ENCODE measurements at regions of chr3 and their contacts with region 1.

Region 1: DNA sequence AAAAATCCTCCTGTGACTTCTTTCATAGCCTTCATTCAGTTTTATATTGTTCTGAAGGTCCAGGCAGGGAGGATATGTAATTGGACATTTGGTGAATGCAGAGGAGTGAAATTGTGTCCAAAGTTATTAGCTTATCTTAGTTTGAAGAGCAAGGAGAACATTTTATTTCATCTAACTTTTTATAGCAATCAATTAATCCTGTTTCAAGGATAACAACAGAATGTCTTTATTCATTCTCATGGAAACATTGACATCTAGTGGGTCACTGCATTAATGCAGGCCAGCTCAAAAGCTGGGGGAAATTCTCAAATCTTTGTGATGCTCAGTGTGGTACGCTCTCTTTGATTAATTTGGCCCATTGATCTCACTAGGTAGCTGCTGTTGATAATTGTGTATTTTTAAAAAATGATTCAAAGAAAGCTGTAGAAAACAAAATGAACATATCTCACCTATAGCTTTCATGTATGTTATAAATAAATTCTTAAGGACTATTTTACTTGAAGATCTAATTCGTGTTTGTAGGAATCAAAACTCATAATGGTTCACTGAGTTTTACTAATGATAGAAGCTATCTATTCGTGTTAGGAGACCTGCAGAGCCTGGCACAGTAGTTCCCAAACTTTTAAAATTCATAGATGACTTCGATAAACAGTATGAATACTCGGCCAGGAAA is 150.8 kb upstream of the KCNMB2 start:
- DNase-seq: peak; percentile 29
- H3K4me3 ChIP-seq: no peak overlapping the region
- H3K27ac ChIP-seq: no peak overlapping the region
- H3K4me1 ChIP-seq: peaks cover 8% of the 10 kb centered on the region
- H3K27me3 ChIP-seq: no peaks in the 10 kb centered on the region
- CTCF ChIP-seq: peak; percentile 77 to 95

Region 2: DNA sequence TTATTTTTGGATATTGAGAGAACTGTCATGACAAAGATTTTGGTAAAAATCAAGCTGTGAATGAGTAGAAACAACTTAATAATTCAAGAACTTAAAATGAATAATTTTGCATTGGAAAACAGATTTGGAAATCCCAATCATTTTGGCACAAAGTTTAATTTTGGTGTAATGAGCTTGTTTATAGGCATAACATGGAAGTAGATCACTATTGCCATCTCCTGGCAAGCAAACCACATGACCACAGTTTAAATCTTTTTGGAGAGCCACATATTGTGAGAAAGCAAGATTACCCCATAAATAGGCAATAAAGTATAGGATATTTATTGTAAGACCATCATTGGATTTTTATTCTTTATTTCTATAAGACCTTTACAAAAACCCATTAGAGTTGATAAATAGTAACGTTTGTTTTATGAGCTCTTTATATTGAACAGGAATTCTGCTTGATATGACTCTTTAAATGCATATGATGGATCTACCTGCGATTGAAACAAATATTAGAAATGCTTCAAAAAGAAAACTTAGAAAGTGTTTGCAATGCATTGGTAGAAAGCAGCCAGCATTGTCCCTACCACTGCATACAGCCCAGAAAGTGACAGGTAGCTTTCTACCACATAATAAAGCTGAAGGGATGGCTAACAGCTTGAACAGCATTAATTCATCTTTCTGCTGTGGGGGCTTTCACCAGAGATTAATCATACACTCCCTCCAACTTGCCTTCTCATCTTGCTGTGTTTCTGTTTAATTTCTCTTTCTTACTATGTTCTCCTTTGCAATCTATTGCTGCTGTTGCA is 1955.0 kb before region 1 on chr3:
- CTCF ChIA-PET with region 1: no interaction called
- dilution Hi-C with region 1: no loop called
- in situ Hi-C with region 1: no loop called
- intact Hi-C with region 1: loop called (anchors 10 kb)
- DNase-seq: peak; percentile 25
- H3K4me3 ChIP-seq: no peak overlapping the region
- H3K27ac ChIP-seq: no peak overlapping the region
- H3K4me1 ChIP-seq: no peaks in the 10 kb centered on the region
- H3K27me3 ChIP-seq: no peaks in the 10 kb centered on the region
- CTCF ChIP-seq: peak; percentile 58 to 70

Region 3: GRCh38 chr3:176514297-176514696 is 1871.1 kb before region 1 on chr3:
- CTCF ChIA-PET with region 1: no interaction called
- dilution Hi-C with region 1: no loop called
- in situ Hi-C with region 1: no loop called
- intact Hi-C with region 1: loop called (anchors 5 kb)
- DNase-seq: peak; percentile 32
- H3K4me3 ChIP-seq: no peak overlapping the region
- H3K27ac ChIP-seq: no peak overlapping the region
- H3K4me1 ChIP-seq: no peaks in the 10 kb centered on the region
- H3K27me3 ChIP-seq: no peaks in the 10 kb centered on the region
- CTCF ChIP-seq: peak; percentile 27 to 71

Region 4: GRCh38 chr3:176872771-176873209 is 1512.6 kb before region 1 on chr3:
- CTCF ChIA-PET with region 1: interaction called, 3 read pairs
- dilution Hi-C with region 1: no loop called
- in situ Hi-C with region 1: no loop called
- intact Hi-C with region 1: loop called (anchors 2 kb)
- DNase-seq: peak; percentile 40
- H3K4me3 ChIP-seq: no peak overlapping the region
- H3K27ac ChIP-seq: no peak overlapping the region
- H3K4me1 ChIP-seq: no peaks in the 10 kb centered on the region
- H3K27me3 ChIP-seq: no peaks in the 10 kb centered on the region
- CTCF ChIP-seq: peak; percentile 88 to 90

Region 5: GRCh38 chr3:177050501-177051237 is 1334.7 kb before region 1 on chr3:
- CTCF ChIA-PET with region 1: no interaction called
- dilution Hi-C with region 1: no loop called
- in situ Hi-C with region 1: no loop called
- intact Hi-C with region 1: loop called (anchors 5 kb)
- DNase-seq: peak; percentile 24
- H3K4me3 ChIP-seq: no peak overlapping the region
- H3K27ac ChIP-seq: peak overlapping the region; percentile 22
- H3K4me1 ChIP-seq: peaks cover 8% of the 10 kb centered on the region
- H3K27me3 ChIP-seq: no peaks in the 10 kb centered on the region
- CTCF ChIP-seq: peak; percentile 40 to 54

Region 6: GRCh38 chr3:178084938-178085816 is 300.2 kb before region 1 on chr3:
- CTCF ChIA-PET with region 1: no interaction called
- dilution Hi-C with region 1: no loop called
- in situ Hi-C with region 1: no loop called
- intact Hi-C with region 1: loop called (anchors 10 kb)
- DNase-seq: no peak
- H3K4me3 ChIP-seq: no peak overlapping the region
- H3K27ac ChIP-seq: no peak overlapping the region
- H3K4me1 ChIP-seq: no peaks in the 10 kb centered on the region
- H3K27me3 ChIP-seq: no peaks in the 10 kb centered on the region
- CTCF ChIP-seq: no peak

Region 7: GRCh38 chr3:178480795-178481194 is 95.4 kb after region 1 on chr3:
- CTCF ChIA-PET with region 1: no interaction called
- dilution Hi-C with region 1: no loop called
- in situ Hi-C with region 1: no loop called
- intact Hi-C with region 1: no loop called
- DNase-seq: no peak
- H3K4me3 ChIP-seq: no peak overlapping the region
- H3K27ac ChIP-seq: no peak overlapping the region
- H3K4me1 ChIP-seq: no peaks in the 10 kb centered on the region
- H3K27me3 ChIP-seq: no peaks in the 10 kb centered on the region
- CTCF ChIP-seq: no peak